Adrenal gland (tissue), 19 donors: ENCODE measurements at regions of chr12 and their contacts with region 1.

Region 1: GRCh38 chr12:17853054-17853453 is 236.9 kb downstream of the RERGL start:
- DNase-seq: no peak
- H3K4me3 ChIP-seq: no peak overlapping the region
- H3K27ac ChIP-seq: no peak overlapping the region
- H3K4me1 ChIP-seq: no peaks in the 10 kb centered on the region
- H3K27me3 ChIP-seq: no peaks in the 10 kb centered on the region
- CTCF ChIP-seq: no peak
- POLR2A ChIP-seq: no peak

Region 2: GRCh38 chr12:17016116-17016864 is 836.8 kb before region 1 on chr12:
- intact Hi-C with region 1: no loop called
- DNase-seq: no peak
- H3K4me3 ChIP-seq: no peak overlapping the region
- H3K27ac ChIP-seq: no peak overlapping the region
- H3K4me1 ChIP-seq: no peaks in the 10 kb centered on the region
- H3K27me3 ChIP-seq: no peaks in the 10 kb centered on the region
- CTCF ChIP-seq: no peak
- POLR2A ChIP-seq: no peak

Region 3: DNA sequence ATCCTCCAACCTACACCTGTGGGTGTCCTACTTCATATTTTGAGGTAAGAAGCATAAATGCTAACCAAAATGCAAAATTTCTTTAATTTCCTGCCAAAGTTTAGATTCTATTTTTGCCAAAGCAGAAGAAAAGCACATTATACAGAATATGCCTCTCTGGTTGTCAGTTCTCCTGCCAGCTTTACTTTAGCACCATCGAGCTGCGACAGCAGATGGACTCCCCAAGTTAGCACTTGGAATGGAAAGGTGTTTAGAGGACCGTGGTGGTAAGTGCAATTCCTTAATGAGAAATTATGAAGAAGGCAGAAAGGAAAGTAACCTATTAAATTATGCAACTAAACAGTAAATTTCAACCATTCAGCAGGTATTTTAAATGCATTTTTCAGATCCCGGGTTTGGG is 89.7 kb before region 1 on chr12:
- intact Hi-C with region 1: loop called in 1 of 2 experiments (anchors 5 kb)
- DNase-seq: no peak
- H3K4me3 ChIP-seq: no peak overlapping the region
- H3K27ac ChIP-seq: no peak overlapping the region
- H3K4me1 ChIP-seq: no peaks in the 10 kb centered on the region
- H3K27me3 ChIP-seq: no peaks in the 10 kb centered on the region
- CTCF ChIP-seq: no peak
- POLR2A ChIP-seq: no peak

Region 4: DNA sequence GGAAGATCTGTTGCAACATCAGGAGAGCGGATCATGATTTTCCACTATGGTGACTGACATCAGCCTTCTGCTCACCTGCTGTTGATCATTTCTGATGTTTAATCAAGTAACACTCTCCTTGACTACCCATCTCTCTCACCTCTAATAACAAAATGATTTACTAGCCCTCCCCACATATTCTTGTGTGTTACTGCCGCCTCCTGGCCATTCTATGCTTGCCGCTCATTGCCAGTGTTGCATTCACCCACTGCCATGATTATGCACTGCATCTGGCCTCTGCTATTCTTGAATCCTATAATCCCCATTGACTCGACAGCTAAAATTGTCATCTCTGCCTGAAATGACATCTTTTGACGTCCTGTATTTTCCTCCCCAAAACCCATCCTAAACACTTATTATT is 123.1 kb after region 1 on chr12:
- intact Hi-C with region 1: no loop called
- DNase-seq: no peak
- H3K4me3 ChIP-seq: no peak overlapping the region
- H3K27ac ChIP-seq: no peak overlapping the region
- H3K4me1 ChIP-seq: no peaks in the 10 kb centered on the region
- H3K27me3 ChIP-seq: no peaks in the 10 kb centered on the region
- CTCF ChIP-seq: no peak
- POLR2A ChIP-seq: no peak